ENCODE measurements at regions of chr12 and their contacts with region 1.

Region 1: DNA sequence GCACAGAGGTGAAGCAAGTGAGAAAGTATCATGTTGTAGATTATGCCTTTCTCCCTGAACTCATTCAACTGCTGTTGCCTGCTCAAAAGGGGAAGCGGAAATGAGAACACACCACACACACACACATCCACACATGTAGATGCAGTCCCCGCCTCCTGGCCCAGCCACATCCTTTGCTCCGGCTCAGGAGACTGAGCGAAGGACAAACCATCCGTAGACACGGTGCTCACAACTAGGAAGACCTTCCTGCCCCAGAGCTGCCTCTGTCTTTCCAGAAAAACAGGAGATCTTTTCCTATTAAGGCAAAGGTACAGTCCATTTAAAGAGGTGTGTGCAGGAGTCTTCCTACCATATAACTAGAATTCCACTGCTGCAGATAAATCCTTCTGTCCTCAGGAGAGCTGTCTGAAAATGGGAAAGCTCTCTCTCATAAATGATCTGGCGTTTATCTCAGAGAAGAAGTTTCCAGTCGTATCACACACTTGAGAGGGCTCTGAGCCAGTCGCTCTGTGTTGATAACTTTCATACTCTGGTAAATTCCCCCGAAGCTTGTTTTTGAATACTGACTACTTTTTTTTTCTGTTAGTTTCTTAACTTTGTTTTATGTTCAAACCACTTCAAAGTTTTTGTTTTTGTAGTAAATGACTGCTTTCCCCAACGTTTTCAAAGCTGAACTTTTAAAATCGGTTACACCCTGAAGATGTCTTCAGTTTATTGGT is at the start of gene TESPA1:
- DNase-seq: peak; percentile 92
- ATAC-seq: peak; percentile 87
- H3K4me3 Mint-ChIP-seq: peak within 1 kb of the TSS; percentile 78
- H3K27ac Mint-ChIP-seq: peak within 1 kb of the TSS; percentile 95
- H3K4me1 Mint-ChIP-seq: peaks cover 64% of the 10 kb centered on the region
- H3K27me3 Mint-ChIP-seq: no peaks in the 10 kb centered on the region
- total RNA-seq, gene TESPA1: 81.0 to 107 TPM

Region 2: GRCh38 chr12:54853995-54854566 is 130.7 kb before region 1 on chr12 and contains the start of gene MUCL1:
- CTCF ChIA-PET with region 1: interaction called, 5 read pairs
- POLR2A ChIA-PET with region 1: no interaction called
- intact Hi-C with region 1: loop called (anchors 1 to 10 kb)
- DNase-seq: peak; percentile 82
- ATAC-seq: peak; percentile 95
- H3K4me3 Mint-ChIP-seq: no peak within 1 kb of the TSS
- H3K27ac Mint-ChIP-seq: no peak within 1 kb of the TSS
- H3K4me1 Mint-ChIP-seq: peaks cover 18% of the 10 kb centered on the region
- H3K27me3 Mint-ChIP-seq: no peaks in the 10 kb centered on the region
- total RNA-seq, gene MUCL1: not detected

Region 3: DNA sequence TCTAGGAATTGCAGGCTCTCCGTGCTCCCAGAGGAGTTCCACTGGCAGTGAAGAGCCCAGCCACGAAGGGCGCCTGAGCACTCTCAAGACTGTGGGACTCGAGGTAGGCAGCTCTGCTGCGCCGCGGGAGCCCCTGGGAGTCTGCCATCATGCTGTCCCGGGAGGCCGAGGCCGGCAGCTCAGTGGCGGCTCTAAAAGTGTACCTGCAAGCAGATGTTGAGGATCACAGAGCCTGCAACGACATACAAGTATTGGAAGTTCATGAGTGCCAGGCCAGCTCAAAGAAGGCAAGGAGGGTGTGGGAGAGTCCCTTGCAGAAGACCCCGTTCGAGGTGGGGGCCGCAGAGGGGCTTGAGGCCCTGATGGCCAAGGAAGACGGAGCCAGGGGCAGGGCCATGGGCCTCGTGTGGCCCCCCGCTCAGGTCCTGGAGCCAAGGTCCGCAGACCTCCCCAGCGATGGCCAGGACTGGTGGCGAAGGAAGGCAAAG is 67.8 kb before region 1 on chr12:
- CTCF ChIA-PET with region 1: no interaction called
- POLR2A ChIA-PET with region 1: no interaction called
- intact Hi-C with region 1: no loop called
- DNase-seq: no peak
- ATAC-seq: no peak
- H3K4me3 Mint-ChIP-seq: no peak overlapping the region
- H3K27ac Mint-ChIP-seq: no peak overlapping the region
- H3K4me1 Mint-ChIP-seq: no peaks in the 10 kb centered on the region
- H3K27me3 Mint-ChIP-seq: no peaks in the 10 kb centered on the region

Region 4: DNA sequence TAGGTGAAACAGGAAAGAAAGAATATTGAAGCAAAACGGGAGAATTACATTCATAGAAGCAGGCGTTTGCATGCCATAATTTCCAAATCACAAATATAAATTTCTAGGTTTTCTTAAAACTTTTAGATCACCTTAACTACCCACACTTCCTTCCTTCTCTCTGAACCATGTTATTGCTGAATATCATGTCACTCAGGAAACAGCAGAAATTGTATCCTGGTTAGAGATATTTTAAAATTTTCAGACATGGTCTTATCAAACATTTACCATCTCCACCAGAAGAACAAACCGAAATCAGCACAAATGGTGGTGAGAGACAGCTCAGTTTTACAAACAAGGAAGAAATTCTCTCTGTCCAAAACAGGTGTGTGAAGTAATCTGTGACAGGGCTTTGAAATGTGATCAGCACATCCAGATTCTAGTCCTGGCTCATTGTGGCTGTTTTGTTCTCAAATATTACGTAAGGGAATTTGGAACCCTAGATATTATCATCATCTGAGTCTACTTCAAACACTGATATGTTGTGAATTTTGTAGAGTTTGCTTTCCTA is 16.6 kb before region 1 on chr12:
- CTCF ChIA-PET with region 1: interaction called, 10 read pairs
- POLR2A ChIA-PET with region 1: interaction called, 3 read pairs
- intact Hi-C with region 1: loop called in 1 of 2 experiments (anchors 2 kb)
- DNase-seq: no peak
- ATAC-seq: no peak
- H3K4me3 Mint-ChIP-seq: no peak overlapping the region
- H3K27ac Mint-ChIP-seq: peak overlapping the region; percentile 58
- H3K4me1 Mint-ChIP-seq: peaks cover 60% of the 10 kb centered on the region
- H3K27me3 Mint-ChIP-seq: no peaks in the 10 kb centered on the region